ENCODE measurements at regions of chr16 and their contacts with region 1.

Region 1: GRCh38 chr16:53503270-53503923 is 388 bp upstream of the AKTIP start:
- DNase-seq: peak; percentile 99 to 100 (median 100)
- H3K4me3 ChIP-seq: peak overlapping the region; percentile 78
- H3K4me3 Mint-ChIP-seq: peak overlapping the region; percentile 84 to 97 (median 94)
- H3K27ac ChIP-seq: peak overlapping the region; percentile 68
- H3K27ac Mint-ChIP-seq: peak overlapping the region; percentile 80 to 99 (median 93)
- H3K4me1 ChIP-seq: peaks cover 35% of the 10 kb centered on the region
- H3K4me1 Mint-ChIP-seq: peaks cover 48 to 60% (median 50%) of the 10 kb centered on the region in 3 donors
- H3K27me3 ChIP-seq: no peaks in the 10 kb centered on the region
- H3K27me3 Mint-ChIP-seq: no peaks in the 10 kb centered on the region

Region 2: DNA sequence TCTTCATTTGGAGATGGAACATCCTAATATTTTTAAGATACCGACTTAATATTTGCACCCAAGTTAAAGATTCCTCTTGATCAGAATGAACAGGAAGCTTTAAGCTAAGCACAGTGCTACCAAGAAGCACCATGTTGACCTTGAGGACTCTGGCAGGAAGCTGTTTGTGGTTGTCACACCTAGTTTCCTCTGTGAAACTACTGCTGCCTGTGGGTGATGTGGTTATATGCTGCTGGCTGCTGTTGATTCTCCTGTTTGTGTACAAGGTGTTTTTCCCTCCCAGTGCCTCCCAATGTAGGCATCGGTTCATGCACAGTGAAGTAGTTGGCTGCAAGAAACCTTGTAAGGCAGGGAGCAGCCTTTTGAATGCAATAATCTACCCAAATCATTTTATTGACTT is 45.7 kb before region 1 on chr16:
- CTCF ChIA-PET with region 1: interaction called, 5 read pairs
- POLR2A ChIA-PET with region 1: interaction called, 10 read pairs
- DNase-seq: peak; percentile 57 to 91 (median 88)
- H3K4me3 ChIP-seq: peak overlapping the region; percentile 60
- H3K4me3 Mint-ChIP-seq: peak overlapping the region; percentile 85 to 91 (median 87)
- H3K27ac ChIP-seq: no peak overlapping the region
- H3K27ac Mint-ChIP-seq: peak overlapping the region; percentile 22 to 99 (median 90)
- H3K4me1 ChIP-seq: peaks cover 93% of the 10 kb centered on the region
- H3K4me1 Mint-ChIP-seq: peaks cover 83 to 99% (median 97%) of the 10 kb centered on the region in 3 donors
- H3K27me3 ChIP-seq: no peaks in the 10 kb centered on the region
- H3K27me3 Mint-ChIP-seq: no peaks in the 10 kb centered on the region